Transverse colon (tissue), 4 donors: ENCODE measurements at regions of chr10 and their contacts with region 1.

Region 1: GRCh38 chr10:49177391-49178355 is 10.5 kb downstream of the TMEM273 start:
- DNase-seq: peak; percentile 24
- H3K4me3 ChIP-seq: no peak overlapping the region
- H3K27ac ChIP-seq: peak overlapping the region in 1 of 4 donors; percentile 46
- H3K4me1 ChIP-seq: peaks cover 0 to 13% (median 0%) of the 10 kb centered on the region in 4 donors
- H3K27me3 ChIP-seq: no peaks in the 10 kb centered on the region
- CTCF ChIP-seq: no peak
- EP300 ChIP-seq: no peak
- POLR2A ChIP-seq: no peak

Region 2: DNA sequence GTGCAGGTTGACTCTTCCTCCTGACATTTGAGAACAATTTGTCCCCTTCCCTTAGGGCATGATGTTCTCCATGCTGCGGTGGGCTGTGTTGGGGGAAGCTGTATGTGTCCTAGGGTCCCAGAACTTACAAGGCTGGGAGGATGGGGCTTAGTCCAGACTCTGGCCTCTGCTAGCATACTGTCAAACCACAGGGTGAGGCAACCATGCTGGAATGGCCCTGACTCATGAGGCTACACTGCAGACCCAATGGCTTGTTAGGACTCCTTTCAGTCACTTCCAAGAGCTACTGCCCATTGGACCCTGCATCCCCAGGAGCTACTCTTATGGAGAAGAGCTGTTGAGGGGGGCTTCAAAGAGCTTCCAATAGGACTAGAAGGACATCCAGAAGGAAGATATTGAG is 23.7 kb before region 1 on chr10:
- in situ Hi-C with region 1: no loop called
- intact Hi-C with region 1: no loop called
- DNase-seq: no peak
- H3K4me3 ChIP-seq: no peak overlapping the region
- H3K27ac ChIP-seq: no peak overlapping the region
- H3K4me1 ChIP-seq: no peaks in the 10 kb centered on the region
- H3K27me3 ChIP-seq: no peaks in the 10 kb centered on the region
- CTCF ChIP-seq: no peak
- EP300 ChIP-seq: no peak
- POLR2A ChIP-seq: no peak

Region 3: GRCh38 chr10:49207113-49207512 is 29.4 kb after region 1 on chr10:
- in situ Hi-C with region 1: no loop called
- intact Hi-C with region 1: loop called (anchors 2 kb)
- DNase-seq: no peak
- H3K4me3 ChIP-seq: no peak overlapping the region
- H3K27ac ChIP-seq: no peak overlapping the region
- H3K4me1 ChIP-seq: no peaks in the 10 kb centered on the region
- H3K27me3 ChIP-seq: no peaks in the 10 kb centered on the region
- CTCF ChIP-seq: no peak
- EP300 ChIP-seq: no peak
- POLR2A ChIP-seq: no peak